ENCODE measurements at regions of chr11 and their contacts with region 1.

Region 1: DNA sequence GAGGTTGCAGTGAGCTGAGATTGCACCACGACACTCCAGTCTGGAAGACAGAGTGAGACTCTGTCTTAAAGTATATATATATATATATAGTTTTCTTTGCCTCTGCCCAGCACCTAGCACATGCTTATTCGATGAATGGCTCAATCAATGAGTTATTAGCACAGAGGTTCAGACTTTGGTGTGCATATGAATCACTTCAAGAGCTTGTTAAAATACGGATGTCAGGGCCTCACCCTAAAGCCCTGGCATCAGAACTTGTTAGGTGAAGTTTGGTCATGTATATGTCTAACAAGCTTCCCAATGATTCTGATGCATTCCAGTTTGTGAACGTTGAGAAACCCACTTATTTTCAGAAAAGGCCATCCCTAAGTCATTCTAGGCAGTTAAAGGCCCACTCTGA is 21.8 kb upstream of the TMEM86A start:
- DNase-seq: no peak
- ATAC-seq: no peak
- H3K4me3 ChIP-seq: no peak overlapping the region
- H3K27ac ChIP-seq: no peak overlapping the region
- H3K4me1 ChIP-seq: no peaks in the 10 kb centered on the region
- H3K27me3 ChIP-seq: no peaks in the 10 kb centered on the region
- CTCF ChIP-seq: no peak

Region 2: DNA sequence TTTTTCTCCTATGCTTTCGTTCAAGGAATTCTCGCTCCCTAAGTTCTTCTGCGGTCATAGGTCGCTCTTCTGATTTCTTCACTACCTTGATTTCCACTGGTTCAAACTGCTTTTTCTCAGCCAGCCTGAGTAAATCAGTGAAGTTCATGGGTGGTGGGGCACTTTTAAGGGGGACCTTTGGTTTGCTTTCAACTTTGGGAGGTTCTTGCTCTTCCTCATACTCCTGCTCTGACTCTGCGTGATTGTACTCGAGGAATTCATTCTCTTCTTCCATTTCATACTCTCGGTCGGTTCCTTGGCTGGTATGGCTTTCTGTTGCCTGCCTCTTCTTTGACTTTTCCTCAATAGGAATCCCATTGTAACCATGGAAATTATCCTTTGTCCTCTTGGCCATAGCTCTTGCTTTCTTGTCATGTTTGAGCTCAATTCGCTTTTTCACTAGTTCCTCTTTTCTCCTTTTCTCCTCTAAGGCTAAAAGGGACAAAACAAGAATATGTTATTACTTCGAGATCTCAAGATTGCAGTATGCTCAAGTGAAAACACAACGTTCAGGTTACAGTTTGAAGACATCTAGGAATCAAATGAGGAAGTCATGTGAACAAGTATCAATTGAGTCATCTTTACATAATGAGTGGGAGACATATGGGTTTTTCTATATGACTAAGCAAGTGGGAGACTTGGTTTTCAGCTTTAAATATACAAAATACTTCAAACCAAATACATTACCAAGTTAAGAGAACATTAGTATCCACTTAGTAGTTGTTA is 61.0 kb before region 1 on chr11:
- CTCF ChIA-PET with region 1: no interaction called
- POLR2A ChIA-PET with region 1: interaction called, 13 read pairs
- in situ Hi-C with region 1: no loop called
- intact Hi-C with region 1: no loop called
- DNase-seq: no peak
- ATAC-seq: no peak
- H3K4me3 ChIP-seq: no peak overlapping the region
- H3K27ac ChIP-seq: no peak overlapping the region
- H3K4me1 ChIP-seq: no peaks in the 10 kb centered on the region
- H3K27me3 ChIP-seq: no peaks in the 10 kb centered on the region
- CTCF ChIP-seq: no peak

Region 3: DNA sequence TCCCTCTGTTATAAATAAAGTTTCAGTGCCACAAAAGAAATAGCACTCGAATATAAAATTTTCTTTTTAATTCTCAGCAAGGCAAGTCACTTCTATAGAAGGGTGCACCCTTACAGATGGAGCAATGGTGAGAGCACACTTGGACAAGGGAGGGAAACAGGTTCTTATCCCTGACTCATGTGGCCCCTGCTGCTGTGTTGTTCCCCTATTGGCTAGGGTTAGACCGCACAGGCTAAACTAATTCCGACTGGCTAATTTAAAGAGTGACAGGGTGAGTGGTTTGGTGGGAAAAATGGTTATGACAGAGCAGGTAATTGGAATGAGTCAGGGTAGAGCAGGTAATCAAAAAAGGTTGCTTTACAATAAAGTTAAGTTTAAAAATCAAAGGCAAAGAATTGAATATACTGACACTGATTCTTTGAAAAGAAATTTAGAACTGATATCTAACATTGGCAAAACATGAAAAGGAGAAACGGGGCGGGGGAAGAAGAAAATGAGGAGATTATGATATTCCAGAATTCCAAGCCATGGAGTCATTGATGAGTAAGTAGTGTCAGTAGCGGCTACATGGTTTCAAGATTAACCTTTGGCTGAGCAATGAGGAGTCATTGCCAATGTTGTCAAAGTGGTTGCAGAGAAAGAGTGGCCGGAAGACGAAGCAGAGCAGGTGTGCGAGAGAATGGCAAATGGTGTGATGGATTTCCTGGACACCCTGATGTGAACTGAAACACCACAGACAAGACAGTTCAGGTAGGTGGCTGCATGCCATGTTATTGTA is 310.8 kb after region 1 on chr11:
- CTCF ChIA-PET with region 1: no interaction called
- POLR2A ChIA-PET with region 1: no interaction called
- in situ Hi-C with region 1: no loop called
- intact Hi-C with region 1: no loop called
- DNase-seq: no peak
- ATAC-seq: no peak
- H3K4me3 ChIP-seq: no peak overlapping the region
- H3K27ac ChIP-seq: no peak overlapping the region
- H3K4me1 ChIP-seq: no peaks in the 10 kb centered on the region
- H3K27me3 ChIP-seq: no peaks in the 10 kb centered on the region
- CTCF ChIP-seq: no peak

Measured in Panc1 (cell line).